AG04450 (cell line): ENCODE measurements at regions of chr1 and their contacts with region 1.

Region 1: GRCh38 chr1:66503841-66504470 is 30.0 kb upstream of the SGIP1 start:
- DNase-seq: no peak
- H3K4me3 ChIP-seq: no peak overlapping the region
- H3K27ac ChIP-seq: no peak overlapping the region
- H3K27me3 ChIP-seq: no peaks in the 10 kb centered on the region
- CTCF ChIP-seq: peak; percentile 74

Region 2: GRCh38 chr1:66253330-66253921 is 250.5 kb before region 1 on chr1:
- CTCF ChIA-PET with region 1: interaction called, 65 read pairs
- POLR2A ChIA-PET with region 1: no interaction called
- DNase-seq: peak; percentile 52
- H3K4me3 ChIP-seq: no peak overlapping the region
- H3K27ac ChIP-seq: no peak overlapping the region
- H3K27me3 ChIP-seq: no peaks in the 10 kb centered on the region
- CTCF ChIP-seq: peak; percentile 80

Region 3: GRCh38 chr1:66452162-66452561 is 51.8 kb before region 1 on chr1:
- CTCF ChIA-PET with region 1: interaction called, 92 read pairs
- POLR2A ChIA-PET with region 1: no interaction called
- DNase-seq: no peak
- H3K4me3 ChIP-seq: no peak overlapping the region
- H3K27ac ChIP-seq: no peak overlapping the region
- H3K27me3 ChIP-seq: no peaks in the 10 kb centered on the region
- CTCF ChIP-seq: peak; percentile 40

Region 4: DNA sequence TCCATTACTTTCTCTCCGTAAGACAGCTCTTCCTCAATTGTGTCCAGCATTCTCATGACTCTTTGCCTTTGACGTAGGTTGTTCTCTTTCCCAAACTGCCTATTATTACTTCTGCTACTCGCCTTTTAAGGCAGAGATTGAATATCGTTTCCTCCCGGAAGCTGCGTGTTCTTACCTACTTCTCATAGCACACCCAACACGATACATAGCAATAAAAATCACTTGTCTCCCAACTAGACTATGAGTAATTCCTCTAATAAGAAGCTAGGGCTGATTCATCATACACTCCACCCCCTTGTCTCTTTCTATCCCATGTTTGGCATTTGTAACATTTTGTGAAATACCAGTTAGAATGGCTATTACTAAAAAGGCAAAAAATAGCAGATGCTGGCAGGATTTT is 25.8 kb before region 1 on chr1:
- CTCF ChIA-PET with region 1: interaction called, 22 read pairs
- POLR2A ChIA-PET with region 1: no interaction called
- DNase-seq: no peak
- H3K4me3 ChIP-seq: no peak overlapping the region
- H3K27ac ChIP-seq: no peak overlapping the region
- H3K27me3 ChIP-seq: no peaks in the 10 kb centered on the region
- CTCF ChIP-seq: no peak

Region 5: DNA sequence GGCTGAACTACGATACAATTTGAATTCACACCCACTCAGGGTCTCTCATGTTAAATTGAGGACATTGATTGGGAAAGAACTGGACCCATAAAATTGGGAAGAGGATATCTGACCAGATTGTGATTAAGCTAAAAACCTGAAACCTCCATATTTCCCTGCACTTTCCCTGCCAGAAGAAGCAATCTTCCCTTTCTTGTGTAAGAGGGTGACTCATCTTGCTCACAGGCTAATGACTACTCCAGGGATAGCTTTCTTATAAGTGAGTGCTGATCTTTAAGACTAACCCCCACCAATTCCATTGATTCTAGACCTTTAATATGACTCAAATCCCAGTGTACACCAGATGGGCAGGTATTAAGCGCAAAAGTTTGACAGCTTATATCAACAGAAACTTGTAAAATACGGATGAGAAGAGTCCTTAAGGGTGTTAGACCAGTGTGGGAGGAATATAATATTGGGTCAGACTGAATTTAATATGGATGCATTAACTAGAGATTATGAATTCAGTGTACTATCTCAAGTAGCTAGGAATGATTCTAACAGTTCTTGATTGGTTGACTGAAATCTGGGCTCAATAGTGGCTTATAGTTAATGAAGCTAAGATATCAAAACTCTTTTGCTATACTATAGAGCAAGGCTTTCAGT is 17.9 kb after region 1 on chr1:
- CTCF ChIA-PET with region 1: interaction called, 66 read pairs
- POLR2A ChIA-PET with region 1: interaction called, 8 read pairs
- DNase-seq: peak; percentile 66
- H3K4me3 ChIP-seq: no peak overlapping the region
- H3K27ac ChIP-seq: no peak overlapping the region
- H3K27me3 ChIP-seq: no peaks in the 10 kb centered on the region
- CTCF ChIP-seq: no peak

Region 6: DNA sequence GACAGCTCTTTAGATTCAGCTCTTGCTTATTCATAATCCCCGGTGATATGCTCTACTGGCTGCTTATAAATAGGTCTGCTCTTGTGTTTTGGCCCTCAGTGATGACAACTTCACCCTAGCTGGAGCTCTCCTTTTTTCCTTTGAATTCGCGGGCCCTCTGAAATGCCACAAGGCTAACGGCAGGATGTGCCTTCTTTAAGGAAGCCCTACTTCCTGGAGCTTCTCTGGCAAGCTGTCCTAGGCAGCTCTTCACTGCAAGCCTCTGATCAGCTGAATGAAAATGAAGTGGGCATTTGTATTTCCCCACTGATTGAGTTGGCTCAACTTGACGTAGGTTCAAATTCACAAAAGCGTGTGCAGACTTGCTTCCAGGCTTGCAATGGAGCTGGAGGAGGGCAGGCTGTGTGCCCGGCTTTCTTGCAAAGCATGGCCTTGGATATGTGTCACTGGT is 52.2 kb after region 1 on chr1:
- CTCF ChIA-PET with region 1: no interaction called
- POLR2A ChIA-PET with region 1: no interaction called
- DNase-seq: no peak
- H3K4me3 ChIP-seq: no peak overlapping the region
- H3K27ac ChIP-seq: no peak overlapping the region
- H3K27me3 ChIP-seq: no peaks in the 10 kb centered on the region
- CTCF ChIP-seq: no peak

Region 7: DNA sequence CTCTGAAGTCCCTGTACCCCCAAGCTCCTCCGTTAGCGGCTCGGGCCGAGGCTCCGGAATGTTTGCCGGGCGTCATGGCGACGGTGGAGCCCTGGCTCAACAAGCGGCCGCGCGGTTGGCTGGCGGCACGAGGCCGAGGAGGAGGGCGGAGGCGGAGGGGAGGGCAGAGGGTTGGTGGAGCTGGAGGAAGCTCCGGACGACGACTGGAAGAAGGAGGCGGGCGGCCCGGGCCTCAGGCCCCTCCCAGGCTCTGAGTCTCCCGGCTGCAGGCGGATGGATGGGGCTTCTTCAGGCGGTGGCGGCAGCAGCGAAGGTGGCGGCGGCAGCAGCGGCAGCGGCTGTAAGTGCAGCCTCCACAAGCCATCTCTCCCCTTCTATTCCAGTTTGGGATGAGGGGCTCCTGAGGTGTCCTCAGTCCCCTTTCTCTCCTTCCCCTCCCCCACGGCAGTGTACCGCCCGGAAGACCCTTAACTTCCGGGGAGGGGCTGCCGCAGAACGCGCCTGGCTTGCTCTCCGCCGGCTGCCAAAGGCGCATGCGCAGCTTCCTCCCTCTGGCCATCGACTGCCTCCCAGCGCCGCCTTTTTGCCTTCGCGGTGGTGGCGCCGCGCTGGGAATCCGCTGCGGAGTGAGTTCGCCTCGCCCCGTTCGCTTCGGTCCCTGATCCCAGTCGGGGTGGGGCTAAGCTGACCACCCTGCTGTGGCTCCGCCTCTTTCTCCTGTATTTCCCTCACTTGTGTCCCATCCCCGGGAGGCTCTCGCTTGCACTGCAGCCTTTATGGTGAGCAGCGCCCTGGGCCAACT is 421.0 kb after region 1 on chr1 and contains the starts of genes DNAI4 and MIER1:
- CTCF ChIA-PET with region 1: no interaction called
- POLR2A ChIA-PET with region 1: no interaction called
- DNase-seq: peak; percentile 98
- H3K4me3 ChIP-seq: peak within 1 kb of the TSS; percentile 85
- H3K27ac ChIP-seq: peak within 1 kb of the TSS; percentile 63
- H3K27me3 ChIP-seq: no peaks in the 10 kb centered on the region
- CTCF ChIP-seq: peak; percentile 31; the same call in 1 of the 2 replicates
- polyA plus RNA-seq, gene DNAI4: 2.1 and 2.2 TPM in 2 replicates
- polyA plus RNA-seq, gene MIER1: 14.3 and 23.6 TPM in 2 replicates